Calu3 (cell line): ENCODE measurements at regions of chr6 and their contacts with region 1.

Region 1: GRCh38 chr6:39561536-39562266 is 163.5 kb downstream of the KIF6 start:
- DNase-seq: no peak
- H3K4me3 Mint-ChIP-seq: no peak overlapping the region
- H3K27ac Mint-ChIP-seq: no peak overlapping the region
- H3K4me1 Mint-ChIP-seq: no peaks in the 10 kb centered on the region
- H3K27me3 Mint-ChIP-seq: peaks cover 16% of the 10 kb centered on the region
- CTCF ChIP-seq: no peak

Region 2: DNA sequence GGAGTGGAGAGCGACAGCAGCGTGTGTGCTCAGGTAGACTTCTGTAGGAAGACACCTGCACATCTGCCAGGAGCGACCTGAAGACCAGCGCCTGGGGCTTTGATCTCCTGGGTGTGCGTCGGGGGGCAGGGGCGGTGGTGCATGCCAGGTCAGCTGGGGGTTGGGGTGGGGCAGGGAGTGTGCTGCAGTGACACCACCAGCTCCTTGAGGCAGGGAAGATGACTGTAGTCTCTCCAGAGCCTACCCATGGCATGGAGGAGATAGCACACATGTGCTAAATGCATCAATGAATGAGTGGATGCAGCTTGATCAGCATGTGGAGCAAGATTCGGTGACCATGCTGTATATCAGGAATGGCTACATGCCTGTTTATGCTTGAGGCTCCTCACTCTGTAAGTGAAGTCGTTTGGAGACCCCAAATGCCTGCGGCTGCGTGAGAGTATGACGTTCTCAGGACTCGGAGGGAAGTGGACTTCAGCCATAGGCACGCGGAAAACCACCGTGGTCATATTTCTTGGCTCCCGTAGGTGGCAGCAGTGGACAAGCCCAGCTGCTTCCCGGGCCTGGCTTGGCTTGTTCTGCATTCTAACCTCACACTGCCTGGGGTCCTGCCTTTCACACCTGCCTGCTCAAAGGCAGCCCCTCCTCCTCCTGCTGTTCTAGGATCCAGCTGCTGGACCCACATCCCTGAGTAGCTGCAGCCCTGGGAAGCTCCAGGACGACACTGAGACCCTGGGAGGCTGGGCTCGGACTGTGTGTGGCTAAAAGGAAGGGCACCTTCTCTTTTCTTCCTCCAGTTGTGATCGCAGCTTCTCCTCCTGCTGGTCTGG is 199.8 kb before region 1 on chr6:
- CTCF ChIA-PET with region 1: no interaction called
- intact Hi-C with region 1: loop called (anchors 5 kb)
- DNase-seq: peak; percentile 84
- H3K4me3 Mint-ChIP-seq: peak overlapping the region; percentile 20
- H3K27ac Mint-ChIP-seq: no peak overlapping the region
- H3K4me1 Mint-ChIP-seq: peaks cover 13% of the 10 kb centered on the region
- H3K27me3 Mint-ChIP-seq: peaks cover 44% of the 10 kb centered on the region
- CTCF ChIP-seq: peak; percentile 73